ENCODE measurements at regions of chr9 and their contacts with region 1.

Region 1: DNA sequence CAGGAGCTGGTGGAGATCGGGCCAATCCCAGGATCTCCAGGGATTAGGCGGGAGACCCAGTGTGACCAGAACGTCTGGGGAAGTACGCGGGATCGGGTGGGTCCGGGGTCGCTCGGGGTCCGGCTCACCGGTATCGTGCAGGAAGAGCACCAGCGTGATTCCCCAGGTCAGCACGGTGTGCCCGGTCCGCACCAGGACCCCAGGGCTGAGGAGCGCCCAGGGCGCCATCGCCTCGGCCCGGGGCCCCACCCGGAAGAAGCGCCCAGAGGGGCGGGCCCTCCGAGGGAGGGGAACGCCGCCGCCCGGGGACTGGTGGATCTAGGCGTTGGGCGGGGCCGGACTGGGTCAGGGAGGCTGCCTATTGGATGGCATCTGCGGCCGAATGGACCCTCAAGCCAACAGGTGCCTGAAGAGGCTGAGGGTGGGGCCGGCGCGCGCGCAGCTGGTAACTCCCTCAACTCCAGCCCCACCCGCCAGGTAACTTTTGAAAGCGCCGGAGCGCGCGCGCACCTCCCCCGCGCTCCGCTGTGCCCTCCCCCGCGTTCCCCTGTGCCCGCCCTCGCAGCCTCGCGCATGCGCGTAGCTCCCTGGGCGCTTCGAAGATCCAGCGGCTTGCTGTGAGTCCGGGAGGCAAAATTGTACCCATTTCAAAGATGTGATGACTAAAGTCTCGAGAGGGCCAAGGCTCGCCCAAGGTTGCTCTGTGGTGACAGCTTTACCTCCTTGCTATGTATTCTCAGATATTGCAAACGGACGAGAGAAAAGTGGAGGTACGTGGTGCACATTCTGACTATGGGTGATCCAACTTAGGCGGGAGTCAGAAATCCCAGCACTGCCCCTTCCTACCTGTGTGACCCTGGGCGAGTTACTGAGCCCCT is at the start of gene ZDHHC12:
- DNase-seq: peak; percentile 99
- H3K4me3 Mint-ChIP-seq: peak within 1 kb of the TSS; percentile 95
- H3K27ac Mint-ChIP-seq: peak within 1 kb of the TSS; percentile 91
- H3K4me1 Mint-ChIP-seq: peaks cover 31% of the 10 kb centered on the region
- H3K27me3 Mint-ChIP-seq: no peaks in the 10 kb centered on the region
- total RNA-seq, gene ZDHHC12: 65.8 to 68.7 TPM

Region 2: DNA sequence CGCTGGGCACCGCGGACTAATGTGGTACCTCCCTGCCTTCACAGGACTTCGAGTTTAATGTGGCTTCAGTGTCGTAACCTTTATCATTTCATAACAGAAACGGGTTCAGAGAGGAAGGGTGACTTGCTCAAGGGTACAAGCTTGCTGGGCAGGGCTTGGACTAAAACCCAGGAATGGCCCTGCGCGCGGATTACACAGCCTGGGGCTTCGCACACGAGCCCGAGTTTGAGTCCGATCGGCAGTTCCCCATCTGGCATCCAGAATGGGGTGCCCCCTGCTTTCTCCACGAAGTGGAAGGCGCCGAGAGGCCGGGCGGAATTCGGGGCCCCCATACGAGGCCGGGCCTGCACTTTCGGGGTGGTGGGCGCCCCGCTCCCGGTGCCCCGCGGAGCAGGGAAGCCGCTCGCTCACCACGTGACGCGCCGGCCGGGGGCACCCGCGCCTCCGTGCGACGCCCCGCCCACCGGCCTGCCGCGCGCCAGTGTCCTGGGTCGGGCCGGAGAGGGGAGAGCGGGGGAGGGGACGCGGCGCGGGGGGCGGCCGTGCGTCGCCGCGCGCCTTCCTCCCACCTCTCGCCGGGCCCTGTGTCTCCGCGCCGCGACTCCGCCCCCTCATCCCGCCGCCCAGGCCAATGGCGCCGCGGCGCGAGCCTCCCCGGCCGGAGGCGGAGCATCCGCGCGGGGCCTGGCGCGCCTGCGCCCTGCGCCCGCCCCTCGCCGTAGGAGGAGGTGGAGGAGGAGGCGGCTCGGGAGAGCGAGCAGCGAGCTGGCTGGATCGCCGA is 35.4 kb before region 1 on chr9 and contains the start of gene SET:
- CTCF ChIA-PET with region 1: no interaction called
- POLR2A ChIA-PET with region 1: interaction called, 3 read pairs
- intact Hi-C with region 1: loop called (anchors 2 kb)
- DNase-seq: peak; percentile 95
- H3K4me3 Mint-ChIP-seq: peak within 1 kb of the TSS; percentile 81
- H3K27ac Mint-ChIP-seq: peak within 1 kb of the TSS; percentile 95
- H3K4me1 Mint-ChIP-seq: peaks cover 54% of the 10 kb centered on the region
- H3K27me3 Mint-ChIP-seq: no peaks in the 10 kb centered on the region
- total RNA-seq, gene SET: 578 to 592 TPM

Region 3: DNA sequence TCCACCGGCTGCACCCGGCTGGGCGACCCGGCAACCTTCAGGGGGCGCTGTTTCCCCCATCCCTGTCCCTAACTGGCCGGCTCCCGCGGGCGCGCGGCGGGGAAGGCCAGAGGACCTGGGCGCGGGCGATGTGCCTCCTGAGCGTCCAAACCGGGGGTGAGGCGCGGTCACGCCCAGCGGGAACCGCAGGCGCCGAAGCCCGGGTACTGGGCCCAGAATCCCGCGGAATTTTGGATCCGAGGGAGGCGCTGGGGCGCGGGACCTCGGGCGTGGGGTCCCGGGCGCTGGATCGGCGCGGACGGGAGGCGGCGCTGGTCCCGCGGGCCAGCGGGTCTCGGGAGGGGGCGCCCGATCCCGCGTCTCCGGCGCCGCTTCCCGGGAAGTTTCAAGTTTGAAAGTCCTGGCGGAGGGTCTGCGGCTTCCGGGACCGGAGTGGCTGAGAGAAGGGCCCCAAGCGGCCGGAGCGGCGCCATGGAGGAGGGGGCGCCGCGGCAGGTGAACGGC is 21.6 kb before region 1 on chr9 and contains the start of gene PKN3:
- CTCF ChIA-PET with region 1: interaction called, 20 read pairs
- POLR2A ChIA-PET with region 1: interaction called, 5 read pairs
- intact Hi-C with region 1: no loop called
- DNase-seq: peak; percentile 91
- H3K4me3 Mint-ChIP-seq: peak within 1 kb of the TSS; percentile 73
- H3K27ac Mint-ChIP-seq: peak within 1 kb of the TSS; percentile 50
- H3K4me1 Mint-ChIP-seq: peaks cover 12% of the 10 kb centered on the region
- H3K27me3 Mint-ChIP-seq: no peaks in the 10 kb centered on the region
- total RNA-seq, gene PKN3: 10.4 to 11.4 TPM

Region 4: DNA sequence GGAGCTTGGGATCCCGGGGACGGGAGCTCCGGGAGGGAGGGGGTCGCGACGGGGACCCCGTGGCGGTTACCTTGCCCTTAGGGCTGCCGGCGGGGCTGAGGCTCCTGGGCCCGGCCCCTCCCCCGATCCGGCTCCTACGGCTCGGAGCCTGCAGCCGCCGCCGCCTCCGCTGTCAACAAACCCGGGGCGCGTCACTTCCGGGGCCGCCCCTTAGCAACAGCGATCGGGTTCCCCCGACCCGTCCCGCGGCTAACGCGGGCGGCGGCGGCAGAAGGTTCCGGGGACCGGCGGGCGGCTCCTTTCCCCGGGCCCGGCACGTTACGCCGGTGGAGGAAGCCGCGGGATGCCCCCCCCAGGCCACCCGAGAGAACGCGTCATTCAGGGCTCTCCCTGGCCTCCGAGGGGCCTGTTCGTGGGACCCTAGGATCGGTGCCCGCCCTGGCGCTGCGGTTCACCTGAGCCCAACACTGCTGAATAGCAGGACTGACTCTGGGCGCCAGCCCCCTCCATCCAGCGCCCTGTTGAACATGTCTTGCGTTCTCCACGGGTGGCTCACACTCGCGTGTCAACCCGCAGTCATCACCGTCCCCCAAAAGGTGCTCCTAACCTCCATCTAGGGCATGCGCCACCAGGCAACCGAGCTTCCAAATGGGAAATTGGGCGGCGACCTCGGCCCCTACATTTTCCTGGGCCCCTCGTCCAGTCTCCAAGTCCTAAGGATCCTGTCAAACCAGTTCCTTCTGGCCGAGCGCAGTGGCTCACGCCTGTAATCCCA is 47.8 kb after region 1 on chr9 and contains the start of gene ZER1:
- CTCF ChIA-PET with region 1: no interaction called
- POLR2A ChIA-PET with region 1: interaction called, 5 read pairs
- intact Hi-C with region 1: loop called (anchors 2 kb)
- DNase-seq: peak; percentile 95
- H3K4me3 Mint-ChIP-seq: peak within 1 kb of the TSS; percentile 94
- H3K27ac Mint-ChIP-seq: peak within 1 kb of the TSS; percentile 82
- H3K4me1 Mint-ChIP-seq: peaks cover 17% of the 10 kb centered on the region
- H3K27me3 Mint-ChIP-seq: no peaks in the 10 kb centered on the region
- total RNA-seq, gene ZER1: 16.2 to 18.0 TPM

Region 5: DNA sequence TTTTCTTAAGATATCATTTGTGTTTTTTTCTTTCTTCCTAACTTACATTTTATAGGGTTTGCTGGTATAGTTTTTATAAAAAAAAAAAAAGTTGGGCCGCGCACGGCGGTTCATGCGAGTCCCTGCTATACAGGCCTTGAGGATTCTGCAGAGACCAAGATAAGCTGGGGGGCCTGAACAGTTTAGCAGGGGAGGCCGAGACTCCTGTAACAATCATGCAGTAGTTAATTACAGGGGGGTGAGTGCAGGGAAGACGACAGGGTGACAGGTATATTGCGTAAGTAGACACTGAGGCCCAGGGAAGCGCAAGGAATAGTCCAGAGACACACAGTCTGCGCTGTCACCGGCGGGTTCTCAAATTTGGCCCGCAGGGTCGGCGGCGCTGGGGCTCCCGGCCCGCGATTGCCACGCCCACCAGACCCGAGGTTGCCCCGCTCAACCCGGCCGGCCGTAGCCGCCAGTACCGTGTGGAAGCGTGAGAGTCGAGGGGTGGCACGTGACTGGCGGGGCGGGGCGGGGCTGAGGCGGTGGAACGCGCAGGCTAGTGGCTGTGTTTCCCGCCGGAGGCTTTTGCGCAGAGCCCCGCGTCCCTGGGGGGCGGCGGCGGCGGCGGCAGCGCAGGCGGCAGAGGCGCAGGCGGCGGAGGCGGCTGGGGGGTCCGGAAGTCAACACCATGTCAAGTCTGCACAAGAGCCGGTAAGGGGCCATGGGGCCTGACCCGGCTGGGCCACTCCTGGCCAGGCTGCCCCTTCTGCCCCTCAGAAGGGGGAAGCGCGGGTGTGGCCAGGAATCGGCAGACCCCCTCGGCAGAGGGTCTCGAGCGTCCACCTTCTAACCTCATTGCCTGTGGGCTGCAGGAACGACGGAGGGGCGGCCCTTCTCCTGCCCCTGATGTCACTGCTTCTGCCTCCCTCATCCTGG is 62.8 kb after region 1 on chr9 and contains the start of gene TBC1D13:
- CTCF ChIA-PET with region 1: no interaction called
- POLR2A ChIA-PET with region 1: interaction called, 3 read pairs
- intact Hi-C with region 1: loop called (anchors 2 kb)
- DNase-seq: peak; percentile 94
- H3K4me3 Mint-ChIP-seq: peak within 1 kb of the TSS; percentile 80
- H3K27ac Mint-ChIP-seq: peak within 1 kb of the TSS; percentile 57
- H3K4me1 Mint-ChIP-seq: peaks cover 13% of the 10 kb centered on the region
- H3K27me3 Mint-ChIP-seq: no peaks in the 10 kb centered on the region
- total RNA-seq, gene TBC1D13: 14.6 to 14.9 TPM